Pancreas (tissue), 10 donors: ENCODE measurements at regions of chr1 and their contacts with region 1.

Region 1: GRCh38 chr1:6401673-6402072 is 8.1 kb upstream of the ACOT7 start:
- DNase-seq: peak in 1 of 6 donors; percentile 1
- ATAC-seq: peak in 1 of 4 donors; percentile 31
- H3K4me3 ChIP-seq: no peak overlapping the region
- H3K27ac ChIP-seq: no peak overlapping the region
- H3K4me1 ChIP-seq: no peaks in the 10 kb centered on the region
- H3K27me3 ChIP-seq: no peaks in the 10 kb centered on the region
- CTCF ChIP-seq: no peak

Region 2: DNA sequence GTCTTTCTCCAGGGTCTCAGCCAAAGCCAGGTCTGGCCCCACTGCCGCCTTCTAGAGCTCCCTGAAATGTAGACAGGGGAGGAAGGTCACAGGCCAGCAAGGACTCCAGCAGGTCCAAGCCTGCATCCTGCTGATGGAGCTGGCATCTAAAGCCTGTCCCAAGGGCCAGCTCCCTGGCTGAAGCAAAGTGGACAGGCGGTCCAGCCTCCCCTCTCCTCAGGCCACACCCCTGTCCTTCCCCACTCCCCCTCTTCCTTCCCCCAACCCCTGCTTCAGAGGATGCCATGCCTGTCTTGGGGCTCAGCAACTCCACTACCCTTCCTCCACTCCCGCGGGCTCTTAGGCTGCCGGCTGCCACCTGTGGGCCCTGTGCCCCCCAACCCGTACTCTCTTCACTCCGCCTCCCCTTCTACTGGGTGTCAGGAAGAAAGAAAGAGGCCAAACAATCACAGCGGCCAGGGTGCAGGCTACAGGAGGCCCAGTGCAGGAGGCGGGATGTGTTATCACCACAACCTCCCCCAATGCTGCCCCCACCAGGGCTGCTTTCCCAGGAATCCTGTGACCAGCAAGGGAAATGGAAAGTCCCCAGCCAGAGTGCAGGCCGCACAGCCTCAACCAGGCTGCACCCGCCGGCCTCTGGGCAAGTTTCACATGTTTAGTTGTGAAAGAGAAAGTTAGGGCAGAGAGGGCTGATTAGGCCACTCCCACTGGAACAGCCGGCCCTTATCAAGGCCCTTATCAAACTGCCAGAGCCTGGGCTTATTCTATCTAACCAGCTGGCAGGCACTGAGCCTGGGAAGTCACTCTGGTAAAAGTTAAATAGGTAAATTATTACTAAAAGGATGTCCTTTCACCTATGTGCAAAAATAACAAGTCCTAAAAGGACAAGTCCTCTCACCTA is 42.2 kb before region 1 on chr1:
- intact Hi-C with region 1: loop called in 1 of 3 experiments (anchors 10 kb)
- DNase-seq: peak; percentile 71 to 88 (median 80)
- ATAC-seq: peak; percentile 80 to 94 (median 90)
- H3K4me3 ChIP-seq: peak overlapping the region in 1 of 4 donors; percentile 1
- H3K27ac ChIP-seq: peak overlapping the region; percentile 68 to 87 (median 78)
- H3K4me1 ChIP-seq: peaks cover 8 to 26% (median 21%) of the 10 kb centered on the region in 3 donors
- H3K27me3 ChIP-seq: no peaks in the 10 kb centered on the region
- CTCF ChIP-seq: no peak

Region 3: DNA sequence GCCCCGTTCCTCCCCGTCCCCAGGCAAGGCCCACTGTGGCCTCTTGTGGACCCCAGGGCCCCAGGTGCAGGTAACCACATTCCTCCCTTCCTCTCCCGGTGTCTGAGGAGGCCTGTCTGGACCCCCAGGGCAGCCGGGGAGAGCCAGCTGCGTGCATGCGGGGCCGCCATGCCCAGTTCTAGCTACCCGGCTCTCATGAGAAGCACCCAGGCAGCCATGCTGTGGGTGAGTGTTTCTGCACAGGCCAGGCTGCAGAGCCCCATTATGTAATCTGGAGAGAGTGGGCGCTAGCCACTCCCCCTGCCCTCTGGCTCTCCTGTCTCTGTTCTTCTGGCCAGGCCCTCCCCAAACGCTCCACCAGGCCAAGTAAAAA is 108.2 kb after region 1 on chr1:
- intact Hi-C with region 1: no loop called
- DNase-seq: peak in 1 of 6 donors; percentile 49
- ATAC-seq: peak in 1 of 4 donors; percentile 58
- H3K4me3 ChIP-seq: no peak overlapping the region
- H3K27ac ChIP-seq: no peak overlapping the region
- H3K4me1 ChIP-seq: no peaks in the 10 kb centered on the region
- H3K27me3 ChIP-seq: no peaks in the 10 kb centered on the region
- CTCF ChIP-seq: no peak